ENCODE measurements at regions of chr15 and their contacts with region 1.

Region 1: GRCh38 chr15:39934397-39935071 is 619 bp downstream of the EIF2AK4 start:
- DNase-seq: peak in 1 of 10 donors; percentile 18

Region 2: GRCh38 chr15:39720621-39721611 is 213.6 kb before region 1 on chr15:
- intact Hi-C with region 1: no loop called
- DNase-seq: no peak

Region 3: DNA sequence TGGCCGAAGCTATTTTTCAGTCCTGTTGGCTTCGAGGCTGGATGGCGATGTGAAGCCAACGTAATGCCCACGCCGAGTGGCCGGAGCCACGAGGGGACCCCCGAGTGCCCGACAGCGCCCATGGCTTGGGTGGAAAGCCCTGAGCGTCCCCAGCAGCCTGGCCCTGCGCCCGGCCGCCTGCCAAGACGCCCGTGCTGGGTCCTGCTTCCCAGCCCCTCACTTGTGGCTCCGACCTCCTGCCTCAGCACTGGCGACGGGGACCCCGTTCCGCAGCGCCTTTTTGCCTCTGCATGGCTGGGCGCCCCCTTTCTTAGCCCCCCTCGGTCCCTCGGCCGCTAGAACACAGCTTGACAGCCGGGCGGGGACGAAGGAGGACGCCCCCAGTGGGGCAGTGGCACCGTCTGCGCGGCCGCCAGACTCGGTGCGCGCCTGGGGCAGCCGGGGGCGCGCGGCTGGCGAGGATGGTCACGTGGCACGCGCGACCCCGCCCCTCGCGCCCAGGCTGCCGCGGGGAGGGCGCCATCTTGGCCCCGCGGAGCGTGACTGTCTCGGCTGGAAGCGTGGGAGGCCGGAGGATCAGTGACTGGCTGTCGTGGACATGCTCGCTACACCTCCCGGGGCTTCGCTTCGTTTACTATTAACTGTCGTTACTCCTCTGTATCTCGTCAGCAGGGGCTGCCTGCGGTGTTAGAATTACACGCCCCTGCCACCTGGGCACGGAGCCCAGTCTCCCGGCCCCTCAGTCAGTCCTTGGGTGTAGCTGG is 13.8 kb before region 1 on chr15:
- intact Hi-C with region 1: loop called (anchors 2 kb)
- DNase-seq: peak; percentile 67 to 97 (median 78)

Region 4: GRCh38 chr15:39976291-39977274 is 42.0 kb after region 1 on chr15:
- intact Hi-C with region 1: loop called (anchors 1 kb)
- DNase-seq: peak; percentile 66 to 97 (median 78)

Region 5: DNA sequence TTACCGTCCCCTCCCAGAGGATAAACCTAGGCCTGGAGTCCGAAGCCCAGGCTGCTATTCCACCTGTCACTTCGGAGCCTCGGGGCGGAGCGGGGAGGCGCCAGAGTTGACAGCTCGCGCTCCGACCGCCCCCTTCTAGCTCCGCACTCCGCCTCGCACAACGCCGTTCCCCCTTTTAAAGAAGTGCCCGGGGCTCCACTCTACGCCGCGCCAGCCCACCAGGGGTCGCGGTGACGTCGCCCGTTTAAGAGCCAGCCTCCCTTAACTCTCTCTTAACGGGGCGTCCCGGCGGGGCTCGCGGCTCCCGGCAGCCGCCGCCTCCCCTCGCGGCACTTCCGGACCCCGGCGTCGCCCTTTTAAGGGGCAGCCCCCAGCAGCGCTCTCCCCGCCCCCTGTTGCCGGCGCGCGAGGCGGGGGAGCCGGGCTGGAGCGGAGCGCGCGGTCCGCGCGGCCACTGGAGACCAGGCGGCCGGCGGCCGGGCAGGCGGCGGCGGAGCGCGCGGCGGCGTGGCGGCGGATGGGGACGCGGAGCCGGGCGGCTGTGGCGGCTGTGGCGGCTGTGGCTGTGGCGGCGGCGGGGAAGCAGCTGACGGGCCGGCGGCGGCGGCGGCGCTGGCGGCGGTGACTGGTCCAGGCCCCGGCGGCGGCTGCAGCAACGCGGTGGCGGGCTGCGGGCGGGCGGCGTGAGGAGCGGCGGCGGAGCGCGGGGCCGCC is 388.9 kb after region 1 on chr15 and contains the start of gene INAFM2:
- intact Hi-C with region 1: no loop called
- DNase-seq: peak; percentile 67 to 97 (median 85)